Naive thymus-derived CD4-positive, alpha-beta T cell (primary cell): ENCODE measurements at regions of chr4 and their contacts with region 1.

Region 1: DNA sequence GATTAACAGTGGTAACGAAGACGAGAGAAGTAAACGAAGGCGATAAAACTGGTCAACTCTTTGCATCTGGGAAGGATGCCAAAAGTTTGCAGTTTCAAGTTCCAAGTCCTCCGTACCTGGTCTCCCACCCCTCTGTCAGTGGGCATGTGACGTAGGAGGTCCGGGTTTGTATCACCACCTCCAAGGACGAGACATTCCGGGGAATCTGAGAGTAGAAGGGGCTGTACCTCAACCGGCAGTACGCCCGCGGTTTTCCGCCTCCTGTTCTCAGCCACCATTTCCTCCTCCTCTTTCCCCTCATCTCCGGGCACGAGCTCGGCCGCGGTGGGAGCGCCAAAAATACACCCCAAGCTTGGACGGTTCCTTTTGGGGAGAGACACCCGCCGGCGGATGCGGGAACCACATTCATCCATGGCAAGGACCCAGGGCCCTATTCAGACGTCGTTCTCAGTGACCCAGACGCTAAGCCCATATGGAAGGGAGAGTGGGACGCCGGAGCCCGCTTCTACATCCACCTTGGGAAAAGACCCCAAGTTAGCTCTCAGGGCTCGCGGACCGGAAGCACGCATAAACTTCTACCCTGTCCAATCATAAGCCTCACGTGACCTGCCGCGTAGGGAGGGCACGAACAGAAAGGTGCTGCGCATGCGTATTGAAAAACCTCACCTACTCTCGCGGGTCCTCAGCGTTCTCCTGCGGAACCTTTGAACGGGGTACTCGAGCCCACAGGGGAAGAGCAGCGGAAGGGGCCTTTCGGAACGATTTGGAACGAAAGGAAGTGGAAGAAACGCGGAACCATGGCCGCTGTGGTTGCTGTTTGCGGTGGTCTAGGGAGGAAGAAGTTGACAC is at the starts of genes HELQ and MRPS18C:
- DNase-seq: peak; percentile 77 to 98 (median 97)
- ATAC-seq: peak; percentile 94
- H3K4me3 ChIP-seq: peak within 1 kb of the TSS; percentile 75
- H3K4me3 Mint-ChIP-seq: peak within 1 kb of the TSS; percentile 98 to 100 (median 99)
- H3K27ac ChIP-seq: peak within 1 kb of the TSS; percentile 98
- H3K27ac Mint-ChIP-seq: peak within 1 kb of the TSS; percentile 100
- H3K4me1 ChIP-seq: peaks cover 24 to 33% of the 10 kb centered on the region in 2 donors
- H3K4me1 Mint-ChIP-seq: peaks cover 21 to 75% (median 58%) of the 10 kb centered on the region in 7 donors
- H3K27me3 ChIP-seq: no peaks in the 10 kb centered on the region
- H3K27me3 Mint-ChIP-seq: peaks cover 0 to 3% (median 0%) of the 10 kb centered on the region in 5 donors
- total RNA-seq, gene HELQ: 14.1 to 53.9 (median 40.4) TPM
- total RNA-seq, gene MRPS18C: 18.4 to 56.1 (median 46.7) TPM

Region 2: DNA sequence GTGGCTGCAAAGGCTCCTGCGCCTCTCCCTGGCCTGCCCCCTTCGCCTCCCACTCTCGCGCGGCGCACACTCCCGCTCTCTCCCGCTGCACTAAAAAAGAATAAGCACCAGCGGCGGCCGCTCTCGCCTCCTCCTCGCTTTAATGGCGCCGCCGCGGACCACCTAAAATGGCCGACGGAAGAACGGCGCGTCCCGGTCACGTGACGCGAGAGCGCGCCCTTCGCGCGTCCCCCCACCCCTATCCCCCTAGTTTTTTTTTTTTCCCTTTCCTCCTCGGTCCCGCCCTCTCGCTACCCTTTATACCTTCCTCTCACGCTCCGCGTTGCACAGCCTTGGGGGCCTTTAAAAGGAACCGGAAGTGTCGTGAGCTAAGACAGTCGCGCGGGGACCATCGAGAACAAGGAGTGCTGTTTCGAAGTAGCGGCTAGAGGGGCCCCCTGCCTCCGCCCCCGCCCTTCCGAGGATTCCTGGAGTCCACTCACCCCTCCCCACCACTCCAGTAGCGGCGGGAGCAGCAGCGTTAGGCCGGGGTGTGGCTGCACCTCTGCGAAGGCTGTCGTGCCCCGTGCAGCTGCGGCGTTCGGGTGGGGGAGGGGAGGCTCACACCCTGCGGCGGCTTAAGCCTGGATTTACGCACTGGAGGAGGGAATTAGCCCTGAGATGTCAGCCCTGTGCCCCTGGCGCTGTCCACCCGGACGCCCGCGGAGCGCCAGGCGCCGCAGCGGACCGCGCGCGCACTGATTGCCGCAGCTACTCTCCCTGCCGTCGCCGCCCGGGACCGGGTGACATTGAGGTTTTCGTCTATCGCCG is 1081.5 kb before region 1 on chr4 and contains the start of gene HNRNPD:
- CTCF ChIA-PET with region 1: no interaction called
- POLR2A ChIA-PET with region 1: interaction called, 3 read pairs
- intact Hi-C with region 1: loop called (anchors 1 kb)
- DNase-seq: peak; percentile 79 to 96 (median 93)
- ATAC-seq: peak; percentile 93
- H3K4me3 ChIP-seq: peak within 1 kb of the TSS; percentile 94
- H3K4me3 Mint-ChIP-seq: peak within 1 kb of the TSS; percentile 91 to 100 (median 97)
- H3K27ac ChIP-seq: peak within 1 kb of the TSS; percentile 98
- H3K27ac Mint-ChIP-seq: peak within 1 kb of the TSS; percentile 95 to 100 (median 99)
- H3K4me1 ChIP-seq: peaks cover 28 to 31% of the 10 kb centered on the region in 2 donors
- H3K4me1 Mint-ChIP-seq: peaks cover 35 to 62% (median 54%) of the 10 kb centered on the region in 7 donors
- H3K27me3 ChIP-seq: no peaks in the 10 kb centered on the region
- H3K27me3 Mint-ChIP-seq: peaks cover 0 to 3% (median 0%) of the 10 kb centered on the region in 5 donors
- total RNA-seq, gene HNRNPD: 200 to 355 (median 238) TPM

Region 3: DNA sequence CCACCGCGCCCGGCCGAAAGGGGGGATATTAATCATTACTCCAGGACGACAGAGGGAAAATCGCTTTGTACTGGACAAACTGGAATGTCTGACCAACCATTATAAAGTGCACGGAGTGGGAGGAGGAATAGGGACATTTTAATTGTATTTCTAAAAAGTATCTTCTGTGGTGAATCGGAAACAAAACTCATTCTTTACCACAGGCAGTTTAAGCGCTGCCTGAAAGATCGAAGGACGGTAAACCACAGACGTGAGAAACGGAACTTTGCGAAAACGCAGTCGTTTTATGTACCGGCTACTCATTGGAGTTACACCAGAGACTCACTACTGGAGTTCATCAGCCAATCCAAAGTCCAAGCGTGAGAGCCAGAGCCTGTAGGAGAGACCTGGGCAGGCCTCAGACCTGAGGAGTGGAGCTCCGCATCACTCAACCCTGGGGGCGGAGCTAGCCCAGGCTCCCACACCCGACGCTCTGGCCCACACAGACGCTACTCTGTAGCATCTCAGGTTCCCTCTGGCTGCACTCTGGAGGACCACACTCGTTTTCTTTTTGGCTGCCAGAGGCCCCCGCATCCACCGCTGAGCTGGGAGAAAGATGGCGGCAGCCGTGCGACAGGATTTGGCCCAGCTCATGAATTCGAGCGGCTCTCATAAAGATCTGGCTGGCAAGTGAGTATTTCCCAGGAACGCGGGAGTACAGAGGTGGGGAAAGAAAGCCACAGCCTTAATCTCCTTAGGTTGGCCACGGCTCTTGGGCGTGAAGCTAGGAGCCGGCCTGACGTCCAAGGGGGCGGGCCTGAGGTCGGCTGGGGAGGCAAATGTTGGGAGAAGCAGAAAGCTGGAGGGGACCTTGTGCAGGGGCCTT is 420.6 kb before region 1 on chr4 and contains the start of gene COPS4:
- CTCF ChIA-PET with region 1: no interaction called
- POLR2A ChIA-PET with region 1: interaction called, 7 read pairs
- intact Hi-C with region 1: loop called (anchors 1 kb)
- DNase-seq: peak; percentile 77 to 98 (median 97)
- ATAC-seq: peak; percentile 99
- H3K4me3 ChIP-seq: peak within 1 kb of the TSS; percentile 98
- H3K4me3 Mint-ChIP-seq: peak within 1 kb of the TSS; percentile 92 to 100 (median 98)
- H3K27ac ChIP-seq: peak within 1 kb of the TSS; percentile 94
- H3K27ac Mint-ChIP-seq: peak within 1 kb of the TSS; percentile 94 to 100 (median 97)
- H3K4me1 ChIP-seq: peaks cover 4 to 19% of the 10 kb centered on the region in 2 donors
- H3K4me1 Mint-ChIP-seq: peaks cover 19 to 44% (median 35%) of the 10 kb centered on the region in 7 donors
- H3K27me3 ChIP-seq: no peaks in the 10 kb centered on the region
- H3K27me3 Mint-ChIP-seq: no peaks in the 10 kb centered on the region
- total RNA-seq, gene COPS4: 23.5 to 32.8 (median 24.7) TPM

Region 4: GRCh38 chr4:83334425-83335241 is 120.9 kb before region 1 on chr4 and contains the start of gene HPSE:
- CTCF ChIA-PET with region 1: no interaction called
- POLR2A ChIA-PET with region 1: interaction called, 5 read pairs
- intact Hi-C with region 1: loop called (anchors 1 to 2 kb)
- DNase-seq: peak; percentile 48 to 73 (median 69)
- ATAC-seq: peak; percentile 94
- H3K4me3 ChIP-seq: peak within 1 kb of the TSS; percentile 80
- H3K4me3 Mint-ChIP-seq: peak within 1 kb of the TSS; percentile 85 to 97 (median 92)
- H3K27ac ChIP-seq: peak within 1 kb of the TSS; percentile 70
- H3K27ac Mint-ChIP-seq: peak within 1 kb of the TSS; percentile 72 to 95 (median 87)
- H3K4me1 ChIP-seq: peaks cover 11% of the 10 kb centered on the region in 2 donors
- H3K4me1 Mint-ChIP-seq: peaks cover 16 to 47% (median 33%) of the 10 kb centered on the region in 7 donors
- H3K27me3 ChIP-seq: no peaks in the 10 kb centered on the region
- H3K27me3 Mint-ChIP-seq: peaks cover 0 to 26% (median 0%) of the 10 kb centered on the region in 5 donors
- total RNA-seq, gene HPSE: 4.4 to 16.2 (median 6.6) TPM

Region 5: DNA sequence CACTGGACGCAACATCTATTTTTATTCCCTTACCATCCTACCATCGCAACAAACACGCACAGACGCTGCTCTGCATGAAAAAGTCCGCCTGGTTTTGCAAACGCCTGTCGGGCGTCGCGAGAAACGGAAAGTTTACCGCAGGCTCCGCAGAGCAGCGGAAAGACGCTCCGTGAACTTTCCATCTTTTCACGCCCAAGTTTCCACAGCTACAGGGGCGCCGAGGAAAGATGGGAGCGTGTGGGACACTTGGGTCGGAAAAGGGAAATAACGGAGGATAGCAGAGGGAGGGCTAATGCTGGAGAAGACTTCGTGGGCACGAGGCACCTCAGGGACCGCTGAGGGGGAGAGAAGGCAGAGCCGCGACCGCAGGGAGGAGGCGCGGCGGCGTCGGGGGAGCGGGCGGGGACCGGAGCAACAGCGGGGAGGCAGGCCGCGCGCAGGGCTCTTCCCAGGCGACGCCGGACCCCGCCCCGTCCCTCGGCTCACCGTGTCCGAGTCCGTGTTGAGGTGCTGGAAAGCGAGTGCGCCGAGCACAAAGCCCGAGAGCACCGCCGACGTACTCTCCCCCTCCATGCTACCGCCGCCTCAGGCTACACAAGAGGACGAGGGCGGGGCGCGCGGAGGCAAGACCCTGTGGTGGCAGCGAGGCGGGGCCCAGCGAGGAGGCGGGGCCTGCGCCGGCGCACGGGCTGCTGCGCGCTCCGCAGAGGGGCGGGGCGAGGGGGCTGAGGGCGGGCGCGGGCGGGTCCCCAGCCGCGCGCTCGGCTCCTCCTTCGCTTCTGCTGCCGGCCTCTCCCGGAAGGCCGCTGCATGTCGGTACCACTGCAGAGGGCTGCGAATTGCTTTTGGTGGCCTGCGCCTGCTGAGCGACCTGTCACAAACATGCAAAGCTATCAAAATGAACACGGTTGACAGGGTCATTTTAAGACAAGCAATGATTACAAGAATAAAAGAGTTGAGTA is 29.3 kb after region 1 on chr4 and contains the start of gene ABRAXAS1:
- CTCF ChIA-PET with region 1: interaction called, 3 read pairs
- POLR2A ChIA-PET with region 1: interaction called, 46 read pairs
- intact Hi-C with region 1: loop called (anchors 1 kb)
- DNase-seq: peak; percentile 91 to 97 (median 96)
- ATAC-seq: peak; percentile 98
- H3K4me3 ChIP-seq: peak within 1 kb of the TSS; percentile 93
- H3K4me3 Mint-ChIP-seq: peak within 1 kb of the TSS; percentile 92 to 99 (median 98)
- H3K27ac ChIP-seq: peak within 1 kb of the TSS; percentile 86
- H3K27ac Mint-ChIP-seq: peak within 1 kb of the TSS; percentile 93 to 99 (median 98)
- H3K4me1 ChIP-seq: peaks cover 4 to 11% of the 10 kb centered on the region in 2 donors
- H3K4me1 Mint-ChIP-seq: peaks cover 15 to 49% (median 36%) of the 10 kb centered on the region in 7 donors
- H3K27me3 ChIP-seq: no peaks in the 10 kb centered on the region
- H3K27me3 Mint-ChIP-seq: peaks cover 0 to under 1% (median 0%) of the 10 kb centered on the region in 5 donors
- total RNA-seq, gene ABRAXAS1: 13.9 to 47.6 (median 24.9) TPM

Region 6: GRCh38 chr4:84582302-84583000 is 1126.9 kb after region 1 on chr4:
- CTCF ChIA-PET with region 1: interaction called, 3 read pairs
- POLR2A ChIA-PET with region 1: no interaction called
- intact Hi-C with region 1: loop called in 1 of 2 experiments (anchors 10 kb)
- DNase-seq: peak; percentile 88 to 96 (median 91)
- ATAC-seq: peak; percentile 93
- H3K4me3 ChIP-seq: peak overlapping the region; percentile 61
- H3K4me3 Mint-ChIP-seq: peak overlapping the region; percentile 67 to 90 (median 85)
- H3K27ac ChIP-seq: peak overlapping the region; percentile 62
- H3K27ac Mint-ChIP-seq: peak overlapping the region in 6 of 9 donors; percentile 38 to 83 (median 50)
- H3K4me1 ChIP-seq: peaks cover 5% of the 10 kb centered on the region in 2 donors
- H3K4me1 Mint-ChIP-seq: peaks cover 9 to 26% (median 17%) of the 10 kb centered on the region in 7 donors
- H3K27me3 ChIP-seq: no peaks in the 10 kb centered on the region
- H3K27me3 Mint-ChIP-seq: peaks cover 18 to 61% (median 36%) of the 10 kb centered on the region in 5 donors